ENCODE measurements at regions of chr4 and their contacts with region 1.

Region 1: GRCh38 chr4:102430461-102430910 is 70.7 kb upstream of the NFKB1 start:
- DNase-seq: no peak
- ATAC-seq: no peak
- H3K4me3 Mint-ChIP-seq: peak overlapping the region; percentile 92
- H3K27ac Mint-ChIP-seq: peak overlapping the region; percentile 76
- H3K4me1 Mint-ChIP-seq: peaks cover 5% of the 10 kb centered on the region
- H3K27me3 Mint-ChIP-seq: no peaks in the 10 kb centered on the region
- CTCF ChIP-seq: no peak

Region 2: DNA sequence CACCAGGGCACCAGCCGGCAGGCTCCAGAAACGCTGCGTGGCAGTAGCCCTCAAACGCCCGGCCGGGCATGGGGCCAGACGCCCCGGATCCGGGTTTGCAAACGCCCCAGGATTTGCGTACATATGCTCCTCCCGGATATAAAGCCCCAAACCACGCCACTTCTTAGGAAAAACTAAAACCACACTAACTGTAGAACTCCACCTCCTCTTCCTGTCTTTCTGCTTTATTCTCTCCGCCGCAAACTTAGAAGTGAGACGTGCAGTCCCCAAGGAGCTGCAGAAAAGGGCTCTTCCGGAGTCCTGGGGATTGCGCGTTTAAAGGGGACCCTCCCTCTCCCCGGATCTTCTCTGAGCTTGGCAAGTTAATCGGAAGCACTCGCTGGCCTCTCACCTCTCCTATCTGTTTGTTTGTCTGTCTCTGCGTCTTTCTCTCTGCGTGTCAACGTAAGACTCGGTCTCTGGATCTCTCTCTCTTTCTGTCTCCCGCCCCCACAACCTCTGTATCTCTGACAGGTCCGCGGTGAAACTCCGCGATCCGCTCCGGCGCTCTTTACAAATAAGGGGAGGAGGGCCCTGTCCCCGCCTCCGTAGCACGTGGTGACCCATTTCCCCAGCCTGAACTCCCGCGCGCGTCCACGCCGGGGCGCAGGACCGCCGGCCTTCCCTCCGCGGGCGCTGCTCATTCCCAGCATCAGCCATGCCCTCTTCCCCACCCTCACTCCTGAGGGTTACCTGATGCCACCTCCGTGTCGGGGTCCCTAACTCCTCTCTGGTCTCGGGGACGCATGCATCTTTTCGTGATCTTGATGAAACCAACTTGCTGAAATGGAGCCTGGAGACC is 85.3 kb before region 1 on chr4 and contains the start of gene SLC39A8:
- CTCF ChIA-PET with region 1: interaction called, 5 read pairs
- POLR2A ChIA-PET with region 1: interaction called, 5 read pairs
- intact Hi-C with region 1: loop called (anchors 1 kb)
- DNase-seq: peak; percentile 82
- ATAC-seq: peak; percentile 87
- H3K4me3 Mint-ChIP-seq: peak within 1 kb of the TSS; percentile 89
- H3K27ac Mint-ChIP-seq: peak within 1 kb of the TSS; percentile 93
- H3K4me1 Mint-ChIP-seq: peaks cover 34% of the 10 kb centered on the region
- H3K27me3 Mint-ChIP-seq: no peaks in the 10 kb centered on the region
- CTCF ChIP-seq: no peak
- total RNA-seq, gene SLC39A8: 17.9 and 18.1 TPM in 2 replicates

Region 3: GRCh38 chr4:102620697-102621497 is 190.4 kb after region 1 on chr4:
- CTCF ChIA-PET with region 1: interaction called, 4 read pairs
- POLR2A ChIA-PET with region 1: no interaction called
- intact Hi-C with region 1: loop called (anchors 1 kb)
- DNase-seq: no peak
- ATAC-seq: no peak
- H3K4me3 Mint-ChIP-seq: no peak overlapping the region
- H3K27ac Mint-ChIP-seq: peak overlapping the region; percentile 30
- H3K4me1 Mint-ChIP-seq: peaks cover 27% of the 10 kb centered on the region
- H3K27me3 Mint-ChIP-seq: no peaks in the 10 kb centered on the region
- CTCF ChIP-seq: no peak

Region 4: GRCh38 chr4:102640669-102641068 is 210.2 kb after region 1 on chr4:
- CTCF ChIA-PET with region 1: no interaction called
- POLR2A ChIA-PET with region 1: no interaction called
- intact Hi-C with region 1: no loop called
- DNase-seq: no peak
- ATAC-seq: no peak
- H3K4me3 Mint-ChIP-seq: no peak overlapping the region
- H3K27ac Mint-ChIP-seq: no peak overlapping the region
- H3K4me1 Mint-ChIP-seq: no peaks in the 10 kb centered on the region
- H3K27me3 Mint-ChIP-seq: no peaks in the 10 kb centered on the region
- CTCF ChIP-seq: no peak

Region 5: DNA sequence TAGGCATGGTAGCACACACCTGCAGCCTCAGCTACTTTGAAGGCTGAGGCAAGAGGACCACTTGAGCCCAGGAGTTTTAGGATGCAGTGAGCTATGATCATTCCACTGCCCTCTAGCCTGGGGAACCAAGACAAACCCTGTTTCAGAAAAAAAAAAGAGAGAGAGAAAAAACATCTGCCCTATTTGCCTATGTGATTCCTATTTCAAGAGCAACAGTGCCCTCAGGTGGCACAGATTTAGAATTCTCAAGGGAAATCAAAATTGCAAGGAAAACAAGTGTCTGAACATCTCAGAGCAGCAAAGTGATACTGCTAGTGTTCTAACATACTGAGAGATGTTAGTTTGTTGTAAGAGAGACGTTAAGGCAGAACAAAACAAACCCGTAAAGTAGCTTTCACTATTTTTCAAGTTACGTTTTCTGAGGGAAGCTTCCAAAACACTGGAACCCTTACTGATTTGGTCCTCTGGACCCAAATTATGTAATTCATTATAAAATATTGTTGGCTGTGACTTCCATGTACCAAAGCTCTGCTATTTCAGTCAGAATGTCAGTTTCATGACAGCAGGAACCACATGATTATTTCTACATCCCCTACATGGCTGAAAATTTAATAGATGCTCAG is 661.2 kb after region 1 on chr4:
- CTCF ChIA-PET with region 1: no interaction called
- POLR2A ChIA-PET with region 1: no interaction called
- intact Hi-C with region 1: loop called (anchors 1 kb)
- DNase-seq: no peak
- ATAC-seq: peak; percentile 88
- H3K4me3 Mint-ChIP-seq: no peak overlapping the region
- H3K27ac Mint-ChIP-seq: no peak overlapping the region
- H3K4me1 Mint-ChIP-seq: peaks cover 12% of the 10 kb centered on the region
- H3K27me3 Mint-ChIP-seq: no peaks in the 10 kb centered on the region
- CTCF ChIP-seq: peak; percentile 38

Region 6: GRCh38 chr4:103451341-103451740 is 1020.9 kb after region 1 on chr4:
- CTCF ChIA-PET with region 1: no interaction called
- POLR2A ChIA-PET with region 1: no interaction called
- intact Hi-C with region 1: no loop called
- DNase-seq: no peak
- ATAC-seq: no peak
- H3K4me3 Mint-ChIP-seq: no peak overlapping the region
- H3K27ac Mint-ChIP-seq: no peak overlapping the region
- H3K4me1 Mint-ChIP-seq: no peaks in the 10 kb centered on the region
- H3K27me3 Mint-ChIP-seq: no peaks in the 10 kb centered on the region
- CTCF ChIP-seq: no peak